Body of pancreas (tissue), 4 donors: ENCODE measurements at regions of chr22 and their contacts with region 1.

Region 1: DNA sequence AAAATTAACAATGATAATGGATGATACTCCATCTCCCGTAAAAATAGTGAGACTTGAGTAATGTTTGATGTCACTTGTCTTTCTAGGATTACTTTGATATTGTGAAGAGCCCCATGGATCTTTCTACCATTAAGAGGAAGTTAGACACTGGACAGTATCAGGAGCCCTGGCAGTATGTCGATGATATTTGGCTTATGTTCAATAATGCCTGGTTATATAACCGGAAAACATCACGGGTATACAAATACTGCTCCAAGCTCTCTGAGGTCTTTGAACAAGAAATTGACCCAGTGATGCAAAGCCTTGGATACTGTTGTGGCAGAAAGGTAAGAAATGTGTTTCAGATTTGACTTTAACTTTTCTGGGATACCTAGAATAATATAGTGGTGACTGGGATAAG is 48.0 kb upstream of the L3MBTL2 start:
- DNase-seq: no peak
- ATAC-seq: no peak
- H3K4me3 ChIP-seq: no peak overlapping the region
- H3K27ac ChIP-seq: no peak overlapping the region
- H3K4me1 ChIP-seq: no peaks in the 10 kb centered on the region
- H3K27me3 ChIP-seq: no peaks in the 10 kb centered on the region
- CTCF ChIP-seq: no peak
- POLR2A ChIP-seq: no peak

Region 2: GRCh38 chr22:40838486-40838885 is 318.6 kb before region 1 on chr22:
- intact Hi-C with region 1: loop called (anchors 10 kb)
- DNase-seq: no peak
- ATAC-seq: no peak
- H3K4me3 ChIP-seq: no peak overlapping the region
- H3K27ac ChIP-seq: no peak overlapping the region
- H3K4me1 ChIP-seq: no peaks in the 10 kb centered on the region
- H3K27me3 ChIP-seq: no peaks in the 10 kb centered on the region
- CTCF ChIP-seq: no peak
- POLR2A ChIP-seq: no peak